Astrocyte of the spinal cord (primary cell): ENCODE measurements at regions of chr12 and their contacts with region 1.

Region 1: DNA sequence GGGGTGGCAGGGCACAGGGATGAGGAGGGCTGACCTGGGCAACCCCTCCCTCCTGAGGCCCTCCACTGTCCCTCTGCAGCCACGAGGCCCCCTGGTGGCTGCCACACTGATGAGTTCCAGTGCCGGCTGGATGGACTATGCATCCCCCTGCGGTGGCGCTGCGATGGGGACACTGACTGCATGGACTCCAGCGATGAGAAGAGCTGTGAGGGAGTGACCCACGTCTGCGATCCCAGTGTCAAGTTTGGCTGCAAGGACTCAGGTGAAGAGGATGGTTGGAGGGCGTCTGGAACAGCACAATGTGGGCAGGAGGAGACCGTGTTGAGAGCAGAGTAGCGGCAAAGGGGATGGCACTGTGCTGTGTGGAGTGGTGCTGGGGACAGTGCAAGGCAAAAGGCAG is 25.7 kb upstream of the LRP1-AS start:
- DNase-seq: no peak
- H3K4me3 ChIP-seq: no peak overlapping the region
- CTCF ChIP-seq: peak; percentile 67

Region 2: GRCh38 chr12:57129889-57130288 is 43.2 kb before region 1 on chr12:
- in situ Hi-C with region 1: loop called (anchors 5 kb)
- DNase-seq: no peak
- H3K4me3 ChIP-seq: peak overlapping the region; percentile 88
- CTCF ChIP-seq: no peak